ENCODE measurements at regions of chr5 and their contacts with region 1.

Region 1: DNA sequence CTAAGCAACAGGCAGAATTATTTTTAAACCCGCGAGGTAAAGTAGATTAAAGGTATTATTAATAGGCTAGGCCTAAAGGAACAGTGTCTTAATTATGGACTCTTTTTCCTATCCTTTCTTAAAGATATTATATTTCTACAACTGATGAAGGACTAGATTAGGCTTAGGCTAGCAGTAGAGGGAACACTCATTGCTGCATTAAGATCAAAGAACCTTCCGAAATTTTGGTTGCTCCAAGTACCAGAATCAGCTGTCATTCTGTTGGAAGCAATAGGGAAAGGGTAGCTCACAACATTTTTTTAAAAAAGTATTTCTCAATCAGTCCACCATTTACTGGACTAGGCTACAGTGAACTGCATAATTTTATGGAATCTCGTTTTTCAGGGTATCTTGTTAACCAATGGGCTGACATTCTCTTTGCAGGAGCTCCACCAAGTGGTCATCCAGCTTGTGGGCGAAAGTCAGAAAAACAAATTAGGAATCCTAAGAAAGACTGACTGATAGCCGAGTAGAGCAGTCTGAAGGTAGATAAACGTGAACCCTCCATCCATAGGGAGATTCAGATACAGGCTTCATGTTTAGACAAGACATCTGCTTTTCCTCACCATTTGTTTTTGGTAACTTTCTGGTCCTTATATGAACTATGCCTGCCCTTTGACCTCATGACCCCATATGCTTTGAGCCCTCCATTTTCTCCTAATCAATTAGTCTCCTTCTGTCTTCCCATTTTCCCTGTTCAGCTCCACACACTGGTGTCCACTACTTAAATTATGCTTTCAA is 103.6 kb upstream of the CHD1 start:
- DNase-seq: peak; percentile 64 to 80 (median 74)
- ATAC-seq: peak; percentile 90
- H3K4me3 ChIP-seq: no peak overlapping the region
- H3K27ac ChIP-seq: peak overlapping the region in 3 of 4 donors; percentile 45 to 61 (median 46)
- H3K4me1 ChIP-seq: peaks cover 16% of the 10 kb centered on the region
- H3K27me3 ChIP-seq: no peaks in the 10 kb centered on the region
- CTCF ChIP-seq: peak; percentile 57 to 92 (median 90)
- POLR2A ChIP-seq: no peak

Region 2: GRCh38 chr5:98905857-98906690 is 126.3 kb before region 1 on chr5:
- intact Hi-C with region 1: loop called (anchors 5 kb)
- DNase-seq: no peak
- ATAC-seq: no peak
- H3K4me3 ChIP-seq: no peak overlapping the region
- H3K27ac ChIP-seq: no peak overlapping the region
- H3K4me1 ChIP-seq: peaks cover 10% of the 10 kb centered on the region
- H3K27me3 ChIP-seq: no peaks in the 10 kb centered on the region
- CTCF ChIP-seq: peak; percentile 45 to 85 (median 83)
- POLR2A ChIP-seq: no peak